ENCODE measurements at regions of chr20 and their contacts with region 1.

Region 1: DNA sequence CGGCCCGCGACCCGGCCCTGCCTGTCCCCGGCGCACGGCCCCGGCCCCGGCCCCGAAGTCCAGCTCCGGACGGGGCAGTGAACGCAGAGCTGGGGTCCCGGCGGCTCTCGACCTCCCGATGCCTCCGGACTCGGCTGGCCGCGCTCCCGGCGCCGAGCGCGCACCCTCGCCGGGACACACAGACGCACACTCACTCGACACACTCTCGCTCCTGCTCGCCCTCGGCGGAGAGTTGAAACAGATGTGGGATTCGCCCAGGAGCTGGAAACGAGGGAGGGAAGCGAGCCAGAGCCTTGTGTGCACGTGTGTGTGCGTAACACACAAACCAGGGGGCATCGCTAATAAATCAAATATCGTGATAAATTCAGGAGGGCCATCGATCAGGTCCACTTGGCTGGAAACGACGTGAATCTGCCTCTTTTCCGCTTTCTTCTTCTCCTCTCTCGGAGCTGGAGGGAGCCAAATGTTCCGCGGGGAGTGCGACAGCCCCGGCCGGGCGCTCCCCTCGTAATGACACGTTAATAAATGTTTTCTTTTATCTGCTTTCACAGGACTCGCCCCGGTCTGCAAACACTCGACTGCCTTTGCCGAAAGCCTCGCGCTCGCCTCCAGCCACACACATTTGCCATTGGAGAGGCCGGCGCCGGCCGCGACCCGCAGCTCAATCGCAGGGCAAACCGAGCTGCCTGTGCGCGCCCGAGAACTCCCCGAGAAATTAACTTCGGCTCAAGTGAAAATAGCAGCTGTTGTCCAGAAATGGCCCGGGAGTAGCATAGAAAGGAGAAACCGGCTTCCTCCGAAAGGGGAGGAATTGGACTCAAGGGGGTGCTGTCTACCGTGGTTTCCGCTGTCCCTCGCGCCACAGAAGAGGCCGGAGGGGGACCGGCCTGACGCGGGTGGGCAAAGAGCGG is 828 bp upstream of the SULF2 start:
- DNase-seq: peak; percentile 77 to 87
- H3K4me3 ChIP-seq: peak overlapping the region; percentile 84
- H3K27ac ChIP-seq: peak overlapping the region; percentile 94
- H3K4me1 ChIP-seq: peaks cover 67% of the 10 kb centered on the region
- H3K27me3 ChIP-seq: no peaks in the 10 kb centered on the region
- CTCF ChIP-seq: peak; percentile 88

Region 2: DNA sequence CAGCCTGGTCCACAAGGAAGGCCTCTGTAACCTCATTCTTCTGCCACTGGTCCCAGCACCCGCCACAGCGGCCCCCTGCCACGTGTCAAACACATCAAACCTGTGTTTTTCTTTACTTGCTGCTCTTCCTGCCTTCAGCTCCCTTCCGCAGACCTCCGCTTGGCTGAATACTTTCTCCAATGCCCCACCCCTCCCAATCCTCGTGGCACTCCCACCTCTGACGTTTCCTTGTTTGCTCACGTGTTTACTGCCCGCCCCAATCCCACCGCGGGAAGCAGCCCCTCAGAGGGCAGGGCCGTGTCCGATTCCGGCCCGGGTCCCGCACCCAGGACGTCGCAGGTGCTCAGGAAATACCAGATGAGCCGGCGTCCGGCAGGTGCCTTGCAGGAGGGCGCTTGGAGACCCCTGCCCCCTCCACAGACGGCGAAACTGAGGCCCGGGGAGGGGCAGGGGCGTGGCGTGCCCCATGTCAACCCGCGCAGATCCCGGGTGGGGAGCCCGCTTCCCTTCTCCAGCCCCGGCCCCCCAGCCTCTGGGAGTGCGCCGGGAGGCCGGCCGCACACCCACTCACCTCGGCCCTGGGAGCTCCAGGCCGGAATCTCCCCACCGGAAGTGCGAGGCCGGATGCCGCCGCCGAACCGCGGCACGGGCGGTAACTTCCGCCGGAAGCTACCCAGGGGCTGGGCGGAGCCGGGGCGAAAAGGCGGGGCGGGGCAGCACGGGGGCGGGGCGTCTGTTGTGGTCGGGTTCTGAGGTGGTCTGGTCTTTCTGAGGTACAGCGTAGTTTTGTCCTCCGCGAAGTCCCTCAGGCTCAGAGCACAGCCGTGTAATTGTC is 1422.1 kb before region 1 on chr20:
- CTCF ChIA-PET with region 1: interaction called, 10 read pairs
- POLR2A ChIA-PET with region 1: no interaction called
- intact Hi-C with region 1: no loop called
- DNase-seq: peak; percentile 87 to 88
- H3K4me3 ChIP-seq: peak overlapping the region; percentile 90
- H3K27ac ChIP-seq: peak overlapping the region; percentile 82
- H3K4me1 ChIP-seq: peaks cover 27% of the 10 kb centered on the region
- H3K27me3 ChIP-seq: no peaks in the 10 kb centered on the region
- CTCF ChIP-seq: no peak

Region 3: DNA sequence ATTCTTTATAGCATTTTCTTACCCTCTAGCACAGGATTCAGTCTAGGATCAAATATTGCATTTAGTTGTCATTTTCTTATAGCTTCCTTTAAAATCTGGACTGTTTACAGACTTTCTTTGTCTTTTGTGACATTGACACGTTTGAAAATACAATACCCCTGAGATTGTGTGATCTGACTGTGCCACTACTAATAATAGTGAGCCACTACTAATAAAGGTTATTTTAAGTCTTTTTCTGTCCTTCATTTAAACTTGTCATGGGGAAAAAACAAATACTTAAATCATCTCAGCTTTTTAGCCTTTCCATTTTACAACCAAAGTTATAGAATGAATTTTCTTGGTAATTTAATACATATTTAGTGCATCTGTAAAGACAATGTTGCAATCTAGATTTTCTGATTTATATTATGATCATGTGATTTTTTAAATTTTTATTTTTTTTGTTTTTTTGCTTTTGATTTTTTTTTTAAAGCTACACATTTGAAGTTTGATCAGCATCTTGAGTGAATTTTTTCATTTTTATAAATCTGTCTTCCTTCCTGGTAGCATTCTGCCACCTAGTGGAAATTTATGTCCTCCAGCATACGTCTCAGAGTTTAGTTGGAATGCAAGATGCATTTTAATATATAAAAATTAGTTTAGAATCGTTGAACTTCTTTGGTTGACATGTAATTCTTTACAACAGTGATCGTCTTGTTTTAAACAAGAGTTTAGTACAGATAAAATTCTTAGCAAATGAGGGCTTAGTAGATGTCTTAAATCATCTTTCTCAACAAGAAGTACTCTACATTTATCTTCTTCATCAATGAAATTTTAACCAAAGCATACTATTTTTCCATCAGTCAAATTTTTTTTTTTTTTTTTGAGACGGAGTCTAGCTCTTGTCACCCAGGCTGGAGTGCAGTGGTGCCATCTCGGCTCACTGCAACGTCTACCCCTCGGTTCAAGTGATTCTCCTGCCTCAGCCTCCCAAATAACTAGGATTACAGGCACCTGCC is 165.0 kb before region 1 on chr20:
- CTCF ChIA-PET with region 1: no interaction called
- POLR2A ChIA-PET with region 1: no interaction called
- intact Hi-C with region 1: no loop called
- DNase-seq: peak; percentile 26 to 61
- H3K4me3 ChIP-seq: no peak overlapping the region
- H3K27ac ChIP-seq: peak overlapping the region; percentile 54
- H3K4me1 ChIP-seq: peaks cover 16% of the 10 kb centered on the region
- H3K27me3 ChIP-seq: no peaks in the 10 kb centered on the region
- CTCF ChIP-seq: peak; percentile 96

Region 4: DNA sequence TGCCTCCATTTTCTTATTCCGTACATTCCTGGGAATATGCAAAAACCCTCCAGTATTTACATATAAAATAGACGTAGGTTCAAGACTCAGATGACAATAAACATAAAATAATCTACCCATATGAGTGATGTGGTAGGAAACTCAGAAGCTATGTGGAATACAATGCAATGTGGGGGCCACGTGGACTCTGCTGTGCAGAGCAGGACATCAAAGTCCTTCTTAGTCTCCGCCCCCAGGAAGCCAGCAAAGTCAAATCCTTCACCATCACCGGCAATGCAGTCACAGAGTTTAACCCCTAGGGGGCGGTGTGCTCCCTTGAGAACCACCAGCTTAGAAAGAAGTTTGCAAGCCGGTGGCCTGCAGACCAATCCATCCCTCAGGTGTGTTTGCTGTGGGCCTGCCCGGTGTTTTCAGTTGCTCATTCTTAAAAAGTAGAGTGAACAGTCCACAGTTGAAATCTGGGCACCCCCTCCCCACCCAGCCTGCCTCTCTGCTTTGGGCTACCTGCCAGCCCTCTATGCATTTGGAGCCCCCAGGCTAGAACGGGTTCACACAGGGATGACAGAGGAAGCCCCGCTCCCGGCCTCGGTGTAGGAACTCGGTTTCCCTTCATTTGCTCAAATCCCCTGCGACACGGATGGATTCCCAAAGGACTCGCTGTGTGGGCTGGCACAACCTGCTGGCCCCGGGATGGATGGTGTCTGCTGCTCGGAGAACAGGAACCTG is 60.7 kb before region 1 on chr20:
- CTCF ChIA-PET with region 1: no interaction called
- POLR2A ChIA-PET with region 1: no interaction called
- intact Hi-C with region 1: loop called (anchors 1 kb)
- DNase-seq: peak; percentile 84 to 86
- H3K4me3 ChIP-seq: no peak overlapping the region
- H3K27ac ChIP-seq: no peak overlapping the region
- H3K4me1 ChIP-seq: 0 out of 2 replicates have a peak, but pooled peaks cover 4% of the 10 kb centered on the region
- H3K27me3 ChIP-seq: no peaks in the 10 kb centered on the region
- CTCF ChIP-seq: peak; percentile 99

Region 5: GRCh38 chr20:47740862-47741184 is 45.3 kb before region 1 on chr20:
- CTCF ChIA-PET with region 1: no interaction called
- POLR2A ChIA-PET with region 1: no interaction called
- intact Hi-C with region 1: no loop called
- DNase-seq: no peak
- H3K4me3 ChIP-seq: no peak overlapping the region
- H3K27ac ChIP-seq: no peak overlapping the region
- H3K4me1 ChIP-seq: no peaks in the 10 kb centered on the region
- H3K27me3 ChIP-seq: no peaks in the 10 kb centered on the region
- CTCF ChIP-seq: no peak

Region 6: DNA sequence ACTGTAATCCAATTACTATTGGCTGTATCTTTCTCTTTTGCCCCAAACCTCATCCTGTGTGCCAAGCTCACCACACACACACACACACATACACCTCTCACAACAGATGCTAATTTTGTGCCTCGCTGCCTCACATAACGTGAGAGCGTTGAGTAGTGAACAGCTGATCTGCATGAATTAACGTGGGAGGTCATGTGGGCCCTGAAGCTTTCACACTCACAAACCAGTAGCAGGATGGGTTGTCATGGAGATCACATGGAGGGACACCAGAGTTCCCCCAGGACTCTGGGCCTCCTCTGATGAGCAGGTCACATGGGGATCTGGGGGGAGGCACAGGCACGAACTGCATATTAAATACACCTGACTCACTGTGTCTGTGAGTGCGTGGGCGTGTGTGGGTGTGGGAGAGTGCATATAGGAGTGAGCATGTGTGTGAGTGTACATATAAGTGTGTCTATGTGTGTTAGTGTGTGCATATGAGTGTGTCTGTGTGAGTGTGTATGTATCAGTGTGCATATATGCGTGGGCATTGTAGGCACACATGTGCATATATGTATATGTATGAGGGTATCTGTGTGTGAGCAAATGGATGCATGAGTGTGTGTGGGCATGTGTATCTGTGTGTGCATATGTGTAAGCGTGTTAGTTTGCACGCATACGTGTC is 61.9 kb after region 1 on chr20:
- CTCF ChIA-PET with region 1: interaction called, 3 read pairs
- POLR2A ChIA-PET with region 1: no interaction called
- intact Hi-C with region 1: loop called (anchors 2 kb)
- DNase-seq: peak in 1 of 2 experiments; percentile 37
- H3K4me3 ChIP-seq: no peak overlapping the region
- H3K27ac ChIP-seq: peak overlapping the region; percentile 95
- H3K4me1 ChIP-seq: peaks cover 69% of the 10 kb centered on the region
- H3K27me3 ChIP-seq: no peaks in the 10 kb centered on the region
- CTCF ChIP-seq: no peak

Region 7: DNA sequence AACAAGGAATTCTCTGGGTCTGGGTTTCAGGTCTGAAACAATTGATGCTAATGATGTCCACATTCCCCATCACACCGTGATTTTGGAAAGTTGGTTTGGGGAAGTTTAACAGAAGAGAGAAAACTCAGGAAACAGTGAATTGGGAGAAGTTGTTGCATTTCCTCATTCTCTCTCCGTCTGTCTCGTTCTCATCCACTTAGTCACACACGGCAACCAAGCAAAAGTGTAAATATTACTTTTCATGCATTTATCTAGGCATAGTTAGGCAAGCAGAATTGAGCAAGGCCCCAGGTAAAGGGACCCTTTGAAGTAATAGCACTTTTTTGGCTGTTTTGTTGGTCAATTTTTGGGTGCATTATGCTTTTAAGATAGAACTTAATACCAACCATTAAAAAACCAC is 136.1 kb after region 1 on chr20:
- CTCF ChIA-PET with region 1: interaction called, 3 read pairs
- POLR2A ChIA-PET with region 1: interaction called, 3 read pairs
- intact Hi-C with region 1: loop called (anchors 5 kb)
- DNase-seq: peak; percentile 49 to 92
- H3K4me3 ChIP-seq: peak overlapping the region; percentile 21; the same call in 1 of the 2 replicates
- H3K27ac ChIP-seq: peak overlapping the region; percentile 88
- H3K4me1 ChIP-seq: peaks cover 56% of the 10 kb centered on the region
- H3K27me3 ChIP-seq: no peaks in the 10 kb centered on the region
- CTCF ChIP-seq: no peak

Region 8: DNA sequence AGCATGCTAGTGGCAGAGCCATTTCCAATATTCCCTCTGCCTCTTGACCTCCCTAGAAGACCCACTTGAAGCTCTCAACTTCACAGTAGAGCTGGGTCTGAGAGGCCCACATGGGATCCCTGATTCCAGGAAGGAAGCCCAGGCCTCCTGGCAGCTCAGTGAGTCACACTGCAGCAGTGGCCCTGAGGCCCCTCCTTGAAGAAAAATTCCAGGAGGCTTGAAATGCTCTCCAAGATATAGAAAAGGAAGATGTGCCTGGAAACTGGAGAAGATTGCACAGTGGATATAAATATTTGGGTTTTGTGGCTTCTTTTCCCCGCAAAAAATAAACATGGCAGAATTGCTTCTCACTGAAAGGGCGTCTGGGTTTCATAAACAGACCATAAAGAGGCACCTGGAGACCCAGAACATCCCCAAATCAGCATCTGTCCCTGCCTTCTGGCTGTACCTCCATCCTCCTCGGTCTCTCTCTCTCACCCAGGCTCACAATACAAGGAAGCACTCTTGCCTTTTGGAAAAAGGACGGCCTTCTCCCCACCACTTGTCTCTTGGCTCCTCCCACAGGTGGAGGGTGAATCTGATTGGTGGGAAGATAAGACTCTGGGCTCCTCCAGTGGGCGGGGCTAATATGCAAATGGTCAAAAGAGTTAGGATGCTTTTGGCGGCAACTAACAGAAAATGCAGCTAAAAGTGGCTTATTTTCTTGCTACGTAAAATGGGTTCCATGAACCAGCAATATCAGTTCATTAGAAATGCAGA is 199.2 kb after region 1 on chr20:
- CTCF ChIA-PET with region 1: interaction called, 5 read pairs
- POLR2A ChIA-PET with region 1: interaction called, 3 read pairs
- intact Hi-C with region 1: loop called (anchors 1 kb)
- DNase-seq: peak; percentile 81 to 89
- H3K4me3 ChIP-seq: peak overlapping the region; percentile 16; the same call in 1 of the 2 replicates
- H3K27ac ChIP-seq: peak overlapping the region; percentile 98
- H3K4me1 ChIP-seq: peaks cover 80% of the 10 kb centered on the region
- H3K27me3 ChIP-seq: no peaks in the 10 kb centered on the region
- CTCF ChIP-seq: no peak

Region 9: DNA sequence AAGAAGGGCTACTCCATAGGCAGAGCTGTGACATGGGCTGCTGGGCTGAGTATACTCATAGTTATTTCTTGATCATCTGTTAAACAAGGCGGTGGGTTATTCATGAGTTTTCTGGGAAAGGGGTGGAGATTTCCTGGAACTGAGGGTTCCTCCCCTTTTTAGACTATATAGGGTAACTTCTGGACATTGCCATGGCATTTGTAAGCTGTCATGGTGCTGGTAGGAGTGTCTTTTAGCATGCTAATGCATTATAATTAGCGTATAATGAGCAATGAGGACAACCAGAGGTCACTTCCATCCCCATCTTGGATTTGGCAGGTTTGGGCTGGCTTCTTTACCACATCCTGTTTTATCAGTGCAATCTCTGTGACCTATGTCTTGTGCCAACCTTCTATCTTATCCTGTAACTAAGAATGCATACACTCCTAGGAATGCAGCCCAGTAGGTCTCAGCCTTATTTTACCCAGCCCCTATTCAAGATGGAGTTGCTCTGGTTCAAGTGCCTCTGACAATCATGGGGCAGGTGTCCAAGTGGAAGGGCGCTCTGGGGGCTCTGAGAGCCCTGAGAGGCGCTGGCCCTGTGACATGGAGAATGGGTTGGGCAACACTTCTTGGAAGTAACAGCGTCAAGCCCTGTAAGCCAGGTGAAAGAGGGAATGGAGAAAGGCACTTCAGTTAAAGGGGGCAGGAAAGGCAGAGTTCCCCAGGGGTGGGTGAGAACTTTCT is 353.3 kb after region 1 on chr20:
- CTCF ChIA-PET with region 1: no interaction called
- POLR2A ChIA-PET with region 1: no interaction called
- intact Hi-C with region 1: loop called (anchors 5 kb)
- DNase-seq: peak; percentile 79 to 88
- H3K4me3 ChIP-seq: no peak overlapping the region
- H3K27ac ChIP-seq: peak overlapping the region; percentile 45
- H3K4me1 ChIP-seq: peaks cover 23% of the 10 kb centered on the region
- H3K27me3 ChIP-seq: no peaks in the 10 kb centered on the region
- CTCF ChIP-seq: no peak